GM23248 (cell line): ENCODE measurements at regions of chr19 and their contacts with region 1.

Region 1: DNA sequence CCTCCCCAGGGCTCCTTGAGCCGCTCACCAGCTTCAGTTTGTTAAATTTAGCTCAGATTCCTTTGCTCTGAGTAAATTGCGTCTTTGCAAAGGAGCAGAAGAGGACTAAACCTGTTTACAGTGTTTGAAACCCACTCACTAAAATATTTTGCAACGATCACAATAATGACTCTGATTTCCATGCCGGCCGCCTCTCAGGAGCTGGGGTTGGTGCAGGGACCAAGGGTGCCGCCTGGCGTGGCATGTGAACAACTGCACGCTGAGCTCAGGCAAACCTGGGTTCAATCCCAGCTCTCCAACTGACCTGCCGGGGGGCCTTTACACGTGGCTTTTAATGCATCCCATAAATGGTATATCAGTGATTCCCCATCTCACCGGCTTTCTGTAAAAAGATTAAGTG is 68.7 kb upstream of the CACNA1A start:
- DNase-seq: peak; percentile 76
- H3K4me3 ChIP-seq: no peak overlapping the region
- H3K27ac ChIP-seq: no peak overlapping the region
- H3K4me1 ChIP-seq: no peaks in the 10 kb centered on the region; the same call in 1 of the 2 replicates
- H3K27me3 ChIP-seq: no peaks in the 10 kb centered on the region

Region 2: GRCh38 chr19:13298565-13299481 is 276.1 kb before region 1 on chr19:
- in situ Hi-C with region 1: loop called (anchors 10 kb)
- DNase-seq: no peak
- H3K4me3 ChIP-seq: peak overlapping the region; percentile 35
- H3K27ac ChIP-seq: no peak overlapping the region
- H3K4me1 ChIP-seq: no peaks in the 10 kb centered on the region
- H3K27me3 ChIP-seq: no peaks in the 10 kb centered on the region

Region 3: DNA sequence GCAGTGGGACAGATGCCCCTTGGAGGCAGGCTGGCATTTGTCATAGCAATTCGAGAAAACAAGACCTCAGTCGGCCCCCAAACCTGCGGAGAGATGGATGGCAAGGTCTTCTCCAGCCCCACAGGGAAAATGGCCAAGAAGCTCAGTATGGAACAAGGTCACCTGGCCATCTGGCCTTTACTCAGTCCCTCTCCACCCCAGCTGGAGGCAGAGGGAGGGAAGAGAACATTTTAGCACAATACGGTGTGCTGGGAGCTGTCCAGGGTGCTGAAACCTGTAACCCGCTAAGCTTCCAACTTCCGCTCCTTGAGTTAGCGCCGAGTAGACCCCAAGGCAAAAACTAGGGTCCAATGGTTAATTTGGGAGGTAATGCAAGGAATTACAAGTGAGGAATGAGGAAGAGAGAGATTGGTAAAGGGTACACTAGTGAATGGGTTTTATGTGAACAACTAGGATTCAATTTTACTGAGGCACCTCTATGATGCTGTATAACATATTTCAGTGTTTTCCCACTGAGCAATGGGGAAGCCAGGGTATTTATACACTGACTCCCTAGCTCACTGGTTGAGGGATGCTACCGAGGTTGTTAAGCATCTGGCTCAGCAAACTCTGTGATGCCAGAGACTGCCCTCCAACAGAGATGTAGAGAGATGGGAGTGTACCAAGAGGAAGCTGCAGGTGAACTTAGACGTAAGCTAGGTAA is 133.0 kb before region 1 on chr19:
- in situ Hi-C with region 1: no loop called
- DNase-seq: peak; percentile 60
- H3K4me3 ChIP-seq: no peak overlapping the region
- H3K27ac ChIP-seq: no peak overlapping the region
- H3K4me1 ChIP-seq: no peaks in the 10 kb centered on the region
- H3K27me3 ChIP-seq: no peaks in the 10 kb centered on the region